GM10248 (cell line): ENCODE measurements at regions of chr17 and their contacts with region 1.

Region 1: GRCh38 chr17:27805520-27806146 is 5.3 kb upstream of the NOS2 start:
- DNase-seq: peak; percentile 82
- CTCF ChIP-seq: peak; percentile 82

Region 2: GRCh38 chr17:27630607-27631410 is 174.8 kb before region 1 on chr17 and contains the start of gene LGALS9:
- CTCF ChIA-PET with region 1: no interaction called
- POLR2A ChIA-PET with region 1: no interaction called
- DNase-seq: peak; percentile 70
- CTCF ChIP-seq: no peak

Region 3: GRCh38 chr17:27760069-27760885 is 45.4 kb before region 1 on chr17:
- CTCF ChIA-PET with region 1: interaction called, 15 read pairs
- POLR2A ChIA-PET with region 1: no interaction called
- DNase-seq: peak; percentile 73
- CTCF ChIP-seq: peak; percentile 94

Region 4: DNA sequence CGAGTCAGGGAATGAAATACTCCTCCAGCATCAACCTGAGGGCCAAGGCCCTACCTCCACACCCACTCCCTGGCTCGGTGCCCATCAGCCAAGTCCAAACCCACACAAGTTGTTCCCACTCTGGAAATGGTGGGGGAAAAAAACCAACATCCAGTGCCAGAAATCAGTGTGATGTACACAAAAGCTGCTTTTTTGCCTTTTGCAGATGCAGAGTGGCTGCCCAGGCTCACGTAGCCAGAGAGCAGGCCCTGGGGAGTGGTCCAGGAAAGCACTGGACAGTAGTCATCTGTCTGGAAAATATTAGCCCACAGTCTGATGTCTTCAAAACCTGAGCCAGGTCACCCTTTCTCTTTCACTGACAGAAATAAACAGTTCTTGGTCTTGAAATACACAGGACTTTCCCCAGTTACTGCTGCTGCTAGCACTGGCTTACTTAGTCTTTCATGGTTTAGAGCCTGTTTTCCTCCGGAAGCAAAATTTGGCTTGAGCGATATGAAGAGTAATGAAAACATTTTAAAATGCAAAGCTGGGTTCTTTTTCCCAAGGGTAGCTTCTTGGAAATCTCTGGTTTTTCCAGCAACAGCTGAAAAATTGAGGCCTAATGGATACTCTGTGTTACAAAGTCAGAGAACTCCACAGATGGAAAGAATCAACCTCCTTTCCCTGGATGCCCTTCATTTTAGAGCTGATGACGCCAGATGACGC is 12.9 kb after region 1 on chr17:
- CTCF ChIA-PET with region 1: interaction called, 29 read pairs
- POLR2A ChIA-PET with region 1: no interaction called
- DNase-seq: no peak
- CTCF ChIP-seq: no peak

Region 5: GRCh38 chr17:27834571-27834970 is 28.9 kb after region 1 on chr17:
- CTCF ChIA-PET with region 1: interaction called, 20 read pairs
- POLR2A ChIA-PET with region 1: no interaction called
- DNase-seq: no peak
- CTCF ChIP-seq: no peak

Region 6: DNA sequence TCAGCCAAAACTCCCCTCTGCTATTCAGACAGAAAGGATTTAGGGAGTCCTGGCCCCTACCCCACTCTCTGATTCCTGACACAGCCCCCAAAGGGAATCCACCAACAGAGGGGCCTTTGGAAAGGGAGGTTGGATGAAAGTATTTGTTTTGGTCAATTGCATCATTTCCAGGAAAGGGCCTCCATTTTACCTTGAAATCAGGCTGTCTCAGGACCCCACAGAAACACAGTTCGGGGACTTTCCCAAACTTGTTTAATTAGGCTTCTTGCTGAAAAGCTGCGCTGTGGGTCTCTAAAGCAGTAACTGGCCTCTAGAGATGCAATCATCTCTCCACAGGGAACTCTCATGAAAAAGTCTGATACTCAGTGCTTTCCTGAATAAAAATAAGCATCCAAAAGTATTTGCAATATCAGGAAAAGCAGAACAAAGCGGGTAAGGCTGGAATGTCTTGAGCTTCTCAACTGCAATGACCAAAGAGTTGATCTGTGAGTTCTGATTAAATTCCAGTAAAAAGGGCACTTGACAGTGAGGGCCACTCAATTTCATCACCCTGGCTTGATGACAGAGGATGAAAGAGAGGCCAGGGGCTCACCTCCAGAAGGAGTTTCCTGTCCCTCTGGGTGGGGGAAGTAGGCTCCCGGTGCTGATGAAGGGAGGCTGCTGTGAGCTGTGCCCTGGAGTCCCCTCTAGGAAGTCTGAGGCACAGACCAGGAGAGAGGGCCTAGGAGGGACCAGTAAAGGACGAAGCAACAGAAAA is 51.2 kb after region 1 on chr17:
- CTCF ChIA-PET with region 1: interaction called, 18 read pairs
- POLR2A ChIA-PET with region 1: no interaction called
- DNase-seq: no peak
- CTCF ChIP-seq: no peak

Region 7: GRCh38 chr17:27892866-27893769 is 87.5 kb after region 1 on chr17 and contains the start of gene LYRM9:
- CTCF ChIA-PET with region 1: interaction called, 154 read pairs
- POLR2A ChIA-PET with region 1: interaction called, 3 read pairs
- DNase-seq: peak; percentile 96
- CTCF ChIP-seq: peak; percentile 95